ENCODE measurements at regions of chr7 and their contacts with region 1.

Region 1: DNA sequence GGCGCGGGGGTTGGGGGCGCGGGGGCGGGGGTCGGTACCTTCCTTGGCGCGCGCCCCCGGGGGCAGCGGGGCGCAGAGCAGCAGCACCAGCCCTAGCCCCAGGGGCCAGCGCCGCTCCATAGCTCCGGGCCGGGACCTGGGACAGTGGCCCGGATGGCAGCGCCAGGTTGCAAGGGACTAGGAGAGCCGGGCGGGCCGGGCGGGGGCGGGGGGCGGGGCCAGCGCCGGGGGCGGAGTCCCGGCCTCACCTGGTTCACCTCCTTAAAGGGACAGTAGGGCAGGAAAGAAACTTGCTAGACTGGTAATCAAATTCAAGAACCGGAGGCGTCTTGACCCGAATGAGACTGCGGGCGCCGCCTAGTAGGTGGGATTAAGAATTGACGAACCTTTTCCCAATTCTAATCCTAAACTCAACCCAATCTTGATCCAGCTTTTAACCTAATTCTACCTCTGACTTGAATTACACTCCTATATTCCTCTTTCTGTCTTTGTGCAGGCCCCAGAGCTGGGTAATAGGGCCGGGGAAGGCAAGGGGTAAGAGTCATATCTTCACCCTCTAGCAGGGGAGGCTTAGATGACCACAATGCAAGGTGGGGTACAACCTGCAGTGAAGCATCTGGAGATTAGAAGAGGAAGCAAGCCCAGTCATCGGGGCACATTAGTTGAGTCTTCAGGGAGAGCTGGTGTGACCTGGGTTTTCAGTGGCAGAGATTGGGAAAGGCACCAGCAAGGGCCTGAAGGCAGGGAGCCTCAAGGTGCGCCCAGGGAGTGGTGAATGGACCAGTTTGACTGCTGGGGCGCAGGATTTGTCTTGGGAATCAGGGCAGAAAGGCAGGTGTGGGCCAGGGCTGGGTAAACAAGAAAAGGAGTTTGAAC is at the start of gene EPHA1:
- DNase-seq: peak; percentile 42
- ATAC-seq: peak; percentile 61
- H3K4me3 Mint-ChIP-seq: peak within 1 kb of the TSS; percentile 74
- H3K27ac Mint-ChIP-seq: peak within 1 kb of the TSS; percentile 63
- H3K4me1 Mint-ChIP-seq: peaks cover 52% of the 10 kb centered on the region
- H3K27me3 Mint-ChIP-seq: no peaks in the 10 kb centered on the region
- CTCF ChIP-seq: peak; percentile 39
- total RNA-seq, gene EPHA1: 2.4 to 2.8 TPM

Region 2: DNA sequence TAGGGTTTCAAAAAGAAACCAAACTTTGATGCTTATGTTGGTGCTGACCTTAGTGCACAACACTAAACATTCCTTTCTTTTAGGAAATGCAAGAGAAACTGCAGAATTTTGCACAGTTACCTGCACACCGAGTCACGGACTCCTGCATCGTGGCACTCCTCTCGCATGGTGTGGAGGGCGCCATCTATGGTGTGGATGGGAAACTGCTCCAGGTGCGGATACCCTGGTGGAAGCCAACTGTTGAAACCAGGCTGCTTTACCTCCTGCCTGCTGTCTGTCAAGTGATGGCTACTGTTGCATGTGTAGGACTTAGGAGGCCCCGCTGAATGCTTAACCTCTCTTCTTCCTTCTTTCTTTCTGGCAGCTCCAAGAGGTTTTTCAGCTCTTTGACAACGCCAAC is 109.1 kb before region 1 on chr7:
- CTCF ChIA-PET with region 1: interaction called, 10 read pairs
- POLR2A ChIA-PET with region 1: interaction called, 11 read pairs
- intact Hi-C with region 1: no loop called
- DNase-seq: peak; percentile 67
- ATAC-seq: peak; percentile 90
- H3K4me3 Mint-ChIP-seq: no peak overlapping the region
- H3K27ac Mint-ChIP-seq: no peak overlapping the region
- H3K4me1 Mint-ChIP-seq: peaks cover 51% of the 10 kb centered on the region
- H3K27me3 Mint-ChIP-seq: no peaks in the 10 kb centered on the region
- CTCF ChIP-seq: peak; percentile 52

Region 3: GRCh38 chr7:143305423-143306070 is 103.4 kb before region 1 on chr7:
- CTCF ChIA-PET with region 1: interaction called, 10 read pairs
- POLR2A ChIA-PET with region 1: interaction called, 11 read pairs
- intact Hi-C with region 1: no loop called
- DNase-seq: peak; percentile 86
- ATAC-seq: peak; percentile 86
- H3K4me3 Mint-ChIP-seq: no peak overlapping the region
- H3K27ac Mint-ChIP-seq: peak overlapping the region; percentile 58
- H3K4me1 Mint-ChIP-seq: peaks cover 46% of the 10 kb centered on the region
- H3K27me3 Mint-ChIP-seq: no peaks in the 10 kb centered on the region
- CTCF ChIP-seq: peak; percentile 82

Region 4: GRCh38 chr7:143372070-143372469 is 36.9 kb before region 1 on chr7:
- CTCF ChIA-PET with region 1: interaction called, 6 read pairs
- POLR2A ChIA-PET with region 1: interaction called, 5 read pairs
- intact Hi-C with region 1: loop called (anchors 5 kb)
- DNase-seq: peak; percentile 82
- ATAC-seq: peak; percentile 60
- H3K4me3 Mint-ChIP-seq: no peak overlapping the region
- H3K27ac Mint-ChIP-seq: peak overlapping the region; percentile 79
- H3K4me1 Mint-ChIP-seq: peaks cover 55% of the 10 kb centered on the region
- H3K27me3 Mint-ChIP-seq: no peaks in the 10 kb centered on the region
- CTCF ChIP-seq: no peak

Region 5: DNA sequence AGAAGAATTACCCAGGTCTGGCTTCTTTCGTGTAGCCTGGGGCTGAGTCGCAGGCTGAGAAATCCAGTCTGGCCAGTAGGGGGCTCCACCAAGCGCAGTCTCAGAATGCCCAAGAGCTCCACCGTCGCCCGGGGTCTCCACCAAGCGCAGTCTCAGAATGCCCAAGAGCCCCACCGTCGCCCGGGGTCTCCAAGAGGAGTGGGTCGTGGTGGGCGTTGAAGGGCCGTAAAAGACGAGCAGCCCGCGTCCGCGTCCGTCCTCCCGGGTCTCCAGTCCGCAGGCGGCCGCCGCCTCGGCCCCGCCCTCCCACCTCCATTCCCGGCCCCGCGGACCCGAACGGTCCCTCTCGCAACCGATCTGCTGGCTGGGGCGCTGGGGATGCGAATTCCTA is 28.7 kb before region 1 on chr7:
- CTCF ChIA-PET with region 1: interaction called, 47 read pairs
- POLR2A ChIA-PET with region 1: interaction called, 11 read pairs
- intact Hi-C with region 1: no loop called
- DNase-seq: peak; percentile 94
- ATAC-seq: peak; percentile 45
- H3K4me3 Mint-ChIP-seq: peak overlapping the region; percentile 85
- H3K27ac Mint-ChIP-seq: peak overlapping the region; percentile 88
- H3K4me1 Mint-ChIP-seq: peaks cover 36% of the 10 kb centered on the region
- H3K27me3 Mint-ChIP-seq: no peaks in the 10 kb centered on the region
- CTCF ChIP-seq: peak; percentile 90

Region 6: DNA sequence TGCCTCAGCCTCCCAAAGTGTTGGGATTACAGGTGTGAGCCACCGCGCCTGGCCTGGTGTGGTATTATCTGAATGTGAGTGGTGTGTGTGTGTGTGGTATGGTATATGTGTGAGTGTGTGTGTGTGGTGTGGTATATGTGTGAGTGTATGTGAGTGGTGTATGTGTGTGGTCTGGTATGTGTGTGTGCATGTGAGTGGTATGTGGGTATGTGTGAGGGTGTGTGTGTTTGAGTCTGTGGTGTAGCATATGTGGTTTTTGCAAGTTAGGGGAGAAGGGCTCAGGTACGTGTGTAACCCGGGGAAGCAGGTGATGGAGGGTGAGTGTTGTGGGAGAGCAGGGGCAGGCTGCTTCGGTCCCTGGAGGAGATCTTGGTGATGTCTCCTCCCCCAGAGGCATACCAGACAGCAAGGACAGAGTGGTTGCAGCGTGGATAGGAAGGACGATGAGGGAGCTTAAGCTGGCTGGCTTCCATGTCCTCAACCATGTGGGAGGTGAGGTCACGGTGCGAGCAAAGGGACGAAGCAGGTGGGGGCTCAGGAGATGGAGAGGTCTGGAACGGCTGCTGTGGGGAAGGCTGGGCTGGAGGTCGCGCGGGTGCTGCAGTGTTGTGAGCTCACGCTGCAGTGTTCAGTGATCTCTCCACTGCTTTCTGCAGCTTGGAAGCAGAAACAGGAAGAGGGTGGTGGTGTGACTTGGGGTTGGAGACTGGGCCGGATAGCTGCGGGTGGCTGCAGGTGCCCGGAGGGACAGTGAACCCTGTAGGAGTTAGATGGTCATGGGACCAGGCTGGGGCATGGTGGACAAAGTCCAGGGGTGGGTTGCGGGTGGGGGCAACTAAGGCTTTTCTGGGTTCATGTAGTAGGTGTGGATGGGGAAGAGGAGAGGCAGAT is 22.8 kb before region 1 on chr7:
- CTCF ChIA-PET with region 1: interaction called, 9 read pairs
- POLR2A ChIA-PET with region 1: interaction called, 11 read pairs
- intact Hi-C with region 1: no loop called
- DNase-seq: peak; percentile 40
- ATAC-seq: peak; percentile 21
- H3K4me3 Mint-ChIP-seq: no peak overlapping the region
- H3K27ac Mint-ChIP-seq: no peak overlapping the region
- H3K4me1 Mint-ChIP-seq: peaks cover 11% of the 10 kb centered on the region
- H3K27me3 Mint-ChIP-seq: no peaks in the 10 kb centered on the region
- CTCF ChIP-seq: no peak

Region 7: DNA sequence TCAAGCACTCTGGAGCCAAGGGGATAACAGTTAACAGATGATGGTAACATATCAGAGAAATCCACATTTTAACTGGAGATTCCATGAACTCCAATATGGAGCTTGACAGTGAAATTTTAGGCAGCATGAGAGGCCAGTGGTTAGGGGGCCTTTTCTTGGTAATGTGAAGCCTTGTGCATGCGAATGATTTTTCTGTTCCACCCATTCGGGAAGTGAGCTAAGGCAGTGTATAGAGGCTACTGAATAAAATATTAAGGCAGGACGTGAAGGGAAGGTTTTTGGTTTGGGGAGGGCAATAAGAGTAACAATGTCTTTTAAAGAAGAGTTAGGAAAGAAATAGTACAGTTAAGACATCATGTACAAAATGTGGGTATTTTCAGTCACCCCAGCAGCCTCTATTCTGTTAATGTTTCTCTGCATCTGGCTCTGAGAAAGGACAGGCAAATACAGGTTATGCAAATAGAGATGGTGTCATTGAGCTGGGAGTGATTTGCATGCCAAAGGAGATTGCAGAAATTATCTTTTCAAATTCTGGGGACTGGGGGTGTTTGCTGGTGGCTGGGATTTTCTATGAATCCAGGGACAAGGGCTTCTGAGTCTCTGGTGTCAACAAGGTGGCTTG is 27.5 kb after region 1 on chr7:
- CTCF ChIA-PET with region 1: no interaction called
- POLR2A ChIA-PET with region 1: no interaction called
- intact Hi-C with region 1: no loop called
- DNase-seq: no peak
- ATAC-seq: no peak
- H3K4me3 Mint-ChIP-seq: no peak overlapping the region
- H3K27ac Mint-ChIP-seq: no peak overlapping the region
- H3K4me1 Mint-ChIP-seq: peaks cover 19% of the 10 kb centered on the region
- H3K27me3 Mint-ChIP-seq: no peaks in the 10 kb centered on the region
- CTCF ChIP-seq: no peak

Region 8: GRCh38 chr7:143492043-143492471 is 83.1 kb after region 1 on chr7:
- CTCF ChIA-PET with region 1: no interaction called
- POLR2A ChIA-PET with region 1: no interaction called
- intact Hi-C with region 1: no loop called
- DNase-seq: no peak
- ATAC-seq: peak; percentile 76
- H3K4me3 Mint-ChIP-seq: no peak overlapping the region
- H3K27ac Mint-ChIP-seq: peak overlapping the region; percentile 12
- H3K4me1 Mint-ChIP-seq: peaks cover 23% of the 10 kb centered on the region
- H3K27me3 Mint-ChIP-seq: no peaks in the 10 kb centered on the region
- CTCF ChIP-seq: no peak

Region 9: DNA sequence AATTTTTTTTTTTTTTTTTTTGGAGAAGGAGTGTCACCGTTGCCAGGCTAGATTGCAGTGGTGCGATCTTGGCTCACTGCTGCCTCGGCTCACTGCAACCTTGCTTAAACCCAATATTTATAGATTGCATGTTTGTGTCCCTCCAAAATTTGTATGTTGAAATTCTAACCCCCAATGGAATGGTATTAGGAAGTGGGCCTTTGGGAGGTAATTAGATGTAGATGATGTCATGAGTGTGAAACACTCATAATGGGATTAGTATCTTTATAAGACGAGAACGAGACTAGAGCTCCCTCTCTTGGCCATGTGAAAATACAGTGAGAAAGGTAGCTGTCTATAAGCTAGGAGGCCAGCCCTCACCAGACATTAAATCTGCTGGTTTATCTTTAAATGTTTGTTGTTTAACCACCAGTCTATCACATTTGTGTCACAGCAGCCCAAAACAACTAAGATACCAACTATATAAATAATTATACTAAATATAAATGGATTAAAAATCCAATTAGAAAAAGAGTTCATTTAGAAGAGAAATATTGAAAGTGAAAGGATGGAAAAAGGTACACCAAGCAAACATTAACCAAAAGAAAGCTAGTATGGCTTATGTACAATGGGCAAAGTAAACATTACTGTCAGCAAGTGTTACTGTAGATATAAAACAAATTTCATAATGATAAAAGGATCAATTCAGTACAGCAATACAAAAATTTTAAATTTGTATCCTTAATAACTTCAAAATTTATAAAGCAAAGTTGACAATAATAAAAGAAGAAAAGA is 483.8 kb after region 1 on chr7:
- CTCF ChIA-PET with region 1: no interaction called
- POLR2A ChIA-PET with region 1: no interaction called
- intact Hi-C with region 1: no loop called
- DNase-seq: no peak
- ATAC-seq: peak; percentile 76
- H3K4me3 Mint-ChIP-seq: no peak overlapping the region
- H3K27ac Mint-ChIP-seq: no peak overlapping the region
- H3K4me1 Mint-ChIP-seq: peaks cover 4% of the 10 kb centered on the region
- H3K27me3 Mint-ChIP-seq: peaks cover 6% of the 10 kb centered on the region
- CTCF ChIP-seq: no peak